Naive thymus-derived CD4-positive, alpha-beta T cell (primary cell): ENCODE measurements at regions of chr16 and their contacts with region 1.

Region 1: DNA sequence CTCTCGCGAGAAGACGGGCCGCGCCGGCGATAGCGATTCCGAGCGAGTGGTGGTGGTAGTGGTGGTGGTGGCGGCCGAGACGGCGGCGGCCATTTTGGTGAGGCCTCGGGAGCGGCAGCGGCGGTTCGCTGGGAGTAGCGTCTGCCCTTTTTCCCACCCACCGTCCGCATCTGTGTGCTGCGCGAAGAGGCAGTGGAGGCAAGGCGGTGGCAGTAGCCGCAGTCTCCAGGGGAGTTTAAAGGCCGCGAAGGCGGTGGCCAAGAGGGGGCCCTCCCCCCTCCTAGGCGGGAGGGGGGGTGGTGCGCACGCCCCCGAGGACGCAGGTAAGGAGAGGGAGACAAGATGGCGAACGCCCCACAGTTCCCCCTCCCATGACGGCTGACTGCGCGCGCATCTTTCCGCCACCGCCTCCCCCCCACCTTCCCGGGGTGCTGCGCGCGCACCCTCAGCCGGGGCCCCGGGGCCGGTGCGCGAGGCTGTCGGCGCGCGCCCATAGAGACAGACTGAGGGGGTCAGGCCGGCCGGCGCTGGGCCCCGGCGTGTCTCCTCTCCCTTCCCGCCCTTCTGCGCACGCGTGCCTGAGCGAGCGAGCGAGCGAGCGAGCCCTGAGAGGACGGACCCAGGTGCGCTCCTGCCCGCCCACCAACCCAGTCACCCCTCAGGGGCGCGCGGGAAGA is 694 bp upstream of the SRCAP start:
- DNase-seq: peak; percentile 98 to 100 (median 99)
- ATAC-seq: peak; percentile 86
- H3K4me3 ChIP-seq: peak overlapping the region; percentile 86
- H3K4me3 Mint-ChIP-seq: peak overlapping the region; percentile 87 to 99 (median 97)
- H3K27ac ChIP-seq: peak overlapping the region; percentile 99
- H3K27ac Mint-ChIP-seq: peak overlapping the region; percentile 99 to 100 (median 100)
- H3K4me1 ChIP-seq: peaks cover 15 to 35% of the 10 kb centered on the region in 2 donors
- H3K4me1 Mint-ChIP-seq: peaks cover 26 to 48% (median 41%) of the 10 kb centered on the region in 7 donors
- H3K27me3 ChIP-seq: no peaks in the 10 kb centered on the region
- H3K27me3 Mint-ChIP-seq: no peaks in the 10 kb centered on the region

Region 2: DNA sequence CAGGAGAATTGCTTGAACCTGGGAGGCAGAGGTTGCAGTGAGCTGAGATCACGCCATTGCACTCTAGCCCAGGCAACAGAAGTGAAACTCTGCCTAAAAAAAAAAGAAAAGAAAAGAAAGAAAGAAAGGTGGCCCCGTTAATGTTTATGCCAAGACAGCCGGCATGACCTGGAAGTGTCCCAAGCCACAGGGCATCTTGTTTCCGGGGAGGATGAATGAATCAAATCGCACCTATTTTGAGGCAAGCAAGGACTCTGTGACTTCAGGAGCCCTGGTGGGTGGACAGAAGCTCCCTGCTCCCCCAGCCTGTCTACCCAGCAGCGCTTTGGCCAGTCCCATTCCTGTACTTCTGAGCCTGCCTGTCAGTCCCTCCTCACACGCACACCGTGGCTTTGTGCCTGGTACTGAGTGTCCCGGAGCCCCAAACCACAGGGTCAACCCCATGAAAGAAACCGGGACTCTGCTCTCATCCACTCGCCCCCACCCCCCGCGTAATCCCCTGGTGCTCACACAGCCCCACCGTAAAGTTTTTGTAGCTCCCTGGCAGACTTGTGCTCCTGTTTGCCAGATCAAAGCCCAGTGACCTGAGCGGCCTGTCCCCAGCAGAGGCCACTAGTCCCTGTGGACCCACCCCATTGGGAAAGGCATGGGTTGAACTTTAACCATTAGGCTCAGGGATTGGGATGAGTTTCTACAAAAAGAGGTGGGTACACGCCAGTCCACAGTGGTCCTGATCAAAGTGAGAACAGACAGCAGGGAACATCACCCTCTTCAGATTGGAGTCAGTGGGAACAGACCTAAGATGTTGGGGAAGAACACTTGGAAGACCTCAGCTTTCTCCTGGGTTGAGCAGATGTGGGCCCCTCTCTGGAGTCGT is 362.4 kb before region 1 on chr16:
- CTCF ChIA-PET with region 1: no interaction called
- POLR2A ChIA-PET with region 1: no interaction called
- intact Hi-C with region 1: loop called in 1 of 2 experiments (anchors 1 kb)
- DNase-seq: peak in 1 of 9 donors; percentile 26
- ATAC-seq: no peak
- H3K4me3 ChIP-seq: peak overlapping the region; percentile 50
- H3K4me3 Mint-ChIP-seq: peak overlapping the region; percentile 80 to 96 (median 87)
- H3K27ac ChIP-seq: peak overlapping the region; percentile 74
- H3K27ac Mint-ChIP-seq: peak overlapping the region; percentile 57 to 91 (median 81)
- H3K4me1 ChIP-seq: peaks cover 7% of the 10 kb centered on the region in 2 donors
- H3K4me1 Mint-ChIP-seq: peaks cover 3 to 30% (median 17%) of the 10 kb centered on the region in 7 donors
- H3K27me3 ChIP-seq: no peaks in the 10 kb centered on the region
- H3K27me3 Mint-ChIP-seq: no peaks in the 10 kb centered on the region

Region 3: GRCh38 chr16:30526823-30527635 is 171.2 kb before region 1 on chr16:
- CTCF ChIA-PET with region 1: no interaction called
- POLR2A ChIA-PET with region 1: no interaction called
- intact Hi-C with region 1: loop called in 1 of 2 experiments (anchors 2 kb)
- DNase-seq: peak; percentile 59 to 95 (median 64)
- ATAC-seq: peak; percentile 87
- H3K4me3 ChIP-seq: peak overlapping the region; percentile 75
- H3K4me3 Mint-ChIP-seq: peak overlapping the region; percentile 78 to 92 (median 88)
- H3K27ac ChIP-seq: peak overlapping the region; percentile 76
- H3K27ac Mint-ChIP-seq: peak overlapping the region; percentile 82 to 94 (median 88)
- H3K4me1 ChIP-seq: peaks cover 0 to 10% of the 10 kb centered on the region in 2 donors
- H3K4me1 Mint-ChIP-seq: peaks cover 16 to 39% (median 32%) of the 10 kb centered on the region in 7 donors
- H3K27me3 ChIP-seq: no peaks in the 10 kb centered on the region
- H3K27me3 Mint-ChIP-seq: no peaks in the 10 kb centered on the region

Region 4: GRCh38 chr16:30585400-30586189 is 112.7 kb before region 1 on chr16 and contains the start of gene ZNF785:
- CTCF ChIA-PET with region 1: no interaction called
- POLR2A ChIA-PET with region 1: interaction called, 3 read pairs
- intact Hi-C with region 1: loop called (anchors 1 kb)
- DNase-seq: peak; percentile 72 to 95 (median 93)
- ATAC-seq: peak; percentile 100
- H3K4me3 ChIP-seq: peak within 1 kb of the TSS; percentile 77
- H3K4me3 Mint-ChIP-seq: peak within 1 kb of the TSS; percentile 85 to 98 (median 94)
- H3K27ac ChIP-seq: peak within 1 kb of the TSS; percentile 81
- H3K27ac Mint-ChIP-seq: peak within 1 kb of the TSS; percentile 89 to 95 (median 92)
- H3K4me1 ChIP-seq: peaks cover 8 to 12% of the 10 kb centered on the region in 2 donors
- H3K4me1 Mint-ChIP-seq: peaks cover 6 to 44% (median 32%) of the 10 kb centered on the region in 7 donors
- H3K27me3 ChIP-seq: no peaks in the 10 kb centered on the region
- H3K27me3 Mint-ChIP-seq: peaks cover 0 to 2% (median 0%) of the 10 kb centered on the region in 5 donors
- total RNA-seq, gene ZNF785: 10.2 to 37.1 (median 21.4) TPM

Region 5: GRCh38 chr16:30715737-30716445 is 17.6 kb after region 1 on chr16:
- CTCF ChIA-PET with region 1: interaction called, 3 read pairs
- POLR2A ChIA-PET with region 1: interaction called, 5 read pairs
- intact Hi-C with region 1: loop called in 1 of 2 experiments (anchors 2 kb)
- DNase-seq: peak in 4 of 9 donors; percentile 12 to 57 (median 28)
- ATAC-seq: peak; percentile 93
- H3K4me3 ChIP-seq: no peak overlapping the region
- H3K4me3 Mint-ChIP-seq: peak overlapping the region; percentile 6 to 85 (median 58)
- H3K27ac ChIP-seq: peak overlapping the region; percentile 27
- H3K27ac Mint-ChIP-seq: peak overlapping the region; percentile 78 to 96 (median 91)
- H3K4me1 ChIP-seq: peaks cover 0 to 16% of the 10 kb centered on the region in 2 donors
- H3K4me1 Mint-ChIP-seq: peaks cover 20 to 39% (median 32%) of the 10 kb centered on the region in 7 donors
- H3K27me3 ChIP-seq: no peaks in the 10 kb centered on the region
- H3K27me3 Mint-ChIP-seq: no peaks in the 10 kb centered on the region

Region 6: GRCh38 chr16:30957456-30958174 is 259.3 kb after region 1 on chr16 and contains the start of gene SETD1A:
- CTCF ChIA-PET with region 1: no interaction called
- POLR2A ChIA-PET with region 1: no interaction called
- intact Hi-C with region 1: loop called in 1 of 2 experiments (anchors 2 kb)
- DNase-seq: peak; percentile 94 to 99 (median 97)
- ATAC-seq: peak; percentile 93
- H3K4me3 ChIP-seq: peak within 1 kb of the TSS; percentile 100
- H3K4me3 Mint-ChIP-seq: peak within 1 kb of the TSS; percentile 81 to 97 (median 96)
- H3K27ac ChIP-seq: peak within 1 kb of the TSS; percentile 93
- H3K27ac Mint-ChIP-seq: peak within 1 kb of the TSS; percentile 97 to 100 (median 98)
- H3K4me1 ChIP-seq: peaks cover 16 to 22% of the 10 kb centered on the region in 2 donors
- H3K4me1 Mint-ChIP-seq: peaks cover 23 to 46% (median 29%) of the 10 kb centered on the region in 7 donors
- H3K27me3 ChIP-seq: no peaks in the 10 kb centered on the region
- H3K27me3 Mint-ChIP-seq: peaks cover 0 to 3% (median 0%) of the 10 kb centered on the region in 5 donors
- total RNA-seq, gene SETD1A: 27.0 to 47.2 (median 36.8) TPM

Region 7: DNA sequence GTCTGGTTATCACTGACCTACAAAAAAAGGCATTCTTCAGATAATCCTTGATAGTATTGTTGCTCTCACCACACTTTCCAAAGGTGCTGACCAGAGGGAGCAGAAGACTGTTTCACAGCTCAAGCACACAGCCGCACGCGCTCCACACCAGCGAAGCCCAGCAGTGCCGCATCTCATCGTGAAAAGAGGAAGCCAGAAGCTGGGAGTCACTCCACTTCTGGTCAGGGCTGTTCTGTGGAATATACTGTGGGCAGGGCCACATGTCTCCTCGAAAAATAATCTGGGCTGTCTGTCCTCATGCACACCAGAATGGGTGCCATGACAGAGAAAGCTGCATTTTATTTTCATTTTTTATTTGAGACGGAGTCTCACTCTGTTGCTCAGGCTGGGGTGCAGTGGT is 458.9 kb after region 1 on chr16:
- CTCF ChIA-PET with region 1: no interaction called
- POLR2A ChIA-PET with region 1: no interaction called
- intact Hi-C with region 1: no loop called
- DNase-seq: no peak
- ATAC-seq: peak; percentile 74
- H3K4me3 ChIP-seq: no peak overlapping the region
- H3K4me3 Mint-ChIP-seq: peak overlapping the region in 8 of 10 donors; percentile 7 to 66 (median 36)
- H3K27ac ChIP-seq: no peak overlapping the region
- H3K27ac Mint-ChIP-seq: peak overlapping the region in 3 of 9 donors; percentile 16 to 38 (median 25)
- H3K4me1 ChIP-seq: no peaks in the 10 kb centered on the region
- H3K4me1 Mint-ChIP-seq: peaks cover 0 to 12% (median 10%) of the 10 kb centered on the region in 7 donors
- H3K27me3 ChIP-seq: no peaks in the 10 kb centered on the region
- H3K27me3 Mint-ChIP-seq: peaks cover 0 to 17% (median 0%) of the 10 kb centered on the region in 5 donors

Region 8: DNA sequence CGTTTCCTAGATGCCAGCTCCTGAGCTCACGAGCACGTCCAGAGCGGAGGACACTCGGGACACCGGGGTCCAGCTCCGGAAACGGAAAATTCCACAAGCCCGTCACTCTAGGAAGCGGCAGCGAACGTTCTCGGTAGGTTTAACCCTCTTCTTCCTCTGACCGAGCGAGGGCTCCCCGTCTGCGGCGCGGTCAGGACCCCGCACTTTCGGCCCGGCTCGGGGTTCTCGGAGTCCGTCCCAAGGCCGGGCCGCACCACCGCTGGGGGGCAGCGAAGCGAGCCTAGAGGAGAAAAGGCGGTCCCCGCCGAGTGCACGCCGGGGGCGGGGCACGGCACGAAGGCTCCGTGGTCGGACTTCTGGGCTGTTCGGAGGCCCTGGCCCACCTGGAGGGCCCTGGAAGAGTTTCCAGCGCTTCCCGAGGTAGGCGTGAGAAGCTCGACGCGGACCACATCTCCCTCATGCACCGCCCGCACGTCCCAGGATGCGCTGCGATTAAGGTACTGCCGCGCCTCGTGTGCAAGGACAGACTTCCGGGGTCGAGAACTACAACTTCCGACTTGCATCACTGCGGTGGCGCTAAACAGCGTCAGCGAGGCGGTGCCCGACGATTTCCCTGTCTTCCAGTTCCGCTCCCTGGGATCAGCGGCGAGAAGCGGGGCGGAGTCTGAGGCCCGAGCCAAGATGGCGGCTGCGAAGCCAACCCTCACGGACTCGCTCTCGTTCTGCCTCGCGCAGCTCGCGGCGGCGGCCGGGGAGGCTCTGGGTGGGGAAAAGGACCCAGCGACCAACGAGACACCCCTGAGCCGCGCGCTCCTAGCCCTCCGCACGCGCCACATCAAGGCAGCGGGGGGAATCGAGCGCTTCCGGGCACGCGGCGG is 760.8 kb after region 1 on chr16 and contains the start of gene ARMC5:
- CTCF ChIA-PET with region 1: no interaction called
- POLR2A ChIA-PET with region 1: no interaction called
- intact Hi-C with region 1: loop called in 1 of 2 experiments (anchors 5 kb)
- DNase-seq: peak in 7 of 9 donors; percentile 92 to 99 (median 98)
- ATAC-seq: peak; percentile 81
- H3K4me3 ChIP-seq: peak within 1 kb of the TSS; percentile 87
- H3K4me3 Mint-ChIP-seq: peak within 1 kb of the TSS; percentile 88 to 96 (median 94)
- H3K27ac ChIP-seq: peak within 1 kb of the TSS; percentile 95
- H3K27ac Mint-ChIP-seq: peak within 1 kb of the TSS; percentile 94 to 99 (median 98)
- H3K4me1 ChIP-seq: peaks cover 32 to 37% of the 10 kb centered on the region in 2 donors
- H3K4me1 Mint-ChIP-seq: peaks cover 26 to 51% (median 46%) of the 10 kb centered on the region in 7 donors
- H3K27me3 ChIP-seq: no peaks in the 10 kb centered on the region
- H3K27me3 Mint-ChIP-seq: no peaks in the 10 kb centered on the region
- total RNA-seq, gene ARMC5: 8.5 to 14.4 (median 11.5) TPM